Panc1 (cell line): ENCODE measurements at regions of chr5 and their contacts with region 1.

Region 1: DNA sequence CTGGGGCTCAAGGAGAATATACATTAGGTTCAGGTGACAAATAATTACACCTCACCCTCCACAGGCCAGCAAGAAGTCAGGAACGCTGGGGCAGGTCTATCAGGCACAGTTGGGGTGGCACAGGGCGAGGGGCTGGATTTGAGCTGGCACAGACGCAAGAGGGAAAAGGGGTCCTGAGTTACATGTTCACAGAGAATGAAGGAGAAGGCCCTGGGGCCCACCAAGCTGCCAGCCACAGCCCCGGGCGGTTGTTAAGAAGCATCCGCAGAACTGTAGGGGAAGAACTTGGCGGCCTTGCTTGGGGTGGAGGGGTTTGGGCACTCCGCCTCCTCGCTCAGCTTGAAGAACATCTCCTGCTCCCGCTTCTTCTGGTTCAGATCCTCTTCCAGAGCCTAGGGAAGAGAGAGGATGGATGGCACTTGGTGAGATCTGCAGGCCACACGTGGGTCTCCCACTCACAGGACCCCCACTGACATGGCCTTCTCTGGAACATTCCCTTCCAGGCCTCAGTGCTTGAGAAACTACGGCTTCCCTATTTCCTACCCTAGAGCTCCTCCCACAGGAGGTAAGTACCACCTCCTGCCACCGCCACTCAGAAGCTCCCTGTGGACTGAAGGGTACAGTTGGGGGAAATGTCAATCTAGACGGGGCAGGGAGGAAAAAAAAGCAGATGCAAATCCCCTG is 38.3 kb upstream of the FBXW11 start:
- DNase-seq: no peak
- ATAC-seq: no peak
- H3K4me3 ChIP-seq: no peak overlapping the region
- H3K27ac ChIP-seq: no peak overlapping the region
- H3K4me1 ChIP-seq: no peaks in the 10 kb centered on the region
- H3K27me3 ChIP-seq: no peaks in the 10 kb centered on the region
- CTCF ChIP-seq: no peak

Region 2: DNA sequence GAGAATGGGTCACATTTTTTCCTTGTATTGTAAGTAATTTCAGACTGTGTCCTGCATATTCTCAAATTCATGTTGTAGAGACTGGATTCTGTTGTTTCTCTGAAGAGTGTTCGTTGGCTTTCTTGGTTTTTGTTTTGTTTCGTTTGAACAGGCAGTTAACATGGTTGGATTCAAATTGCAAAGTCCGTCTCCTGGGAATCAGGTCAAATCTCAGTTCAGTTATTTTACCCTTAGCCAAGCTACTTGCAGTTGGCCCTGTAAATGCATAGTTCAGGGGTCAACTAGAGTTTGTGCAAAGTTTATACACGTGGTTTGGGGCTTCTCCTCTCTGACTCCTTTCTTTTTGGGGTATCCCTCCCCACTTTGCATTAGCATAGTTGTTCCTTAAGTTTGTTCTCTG is 16.6 kb before region 1 on chr5:
- CTCF ChIA-PET with region 1: interaction called, 10 read pairs
- POLR2A ChIA-PET with region 1: no interaction called
- in situ Hi-C with region 1: no loop called
- intact Hi-C with region 1: no loop called
- DNase-seq: no peak
- ATAC-seq: no peak
- H3K4me3 ChIP-seq: no peak overlapping the region
- H3K27ac ChIP-seq: no peak overlapping the region
- H3K4me1 ChIP-seq: no peaks in the 10 kb centered on the region
- H3K27me3 ChIP-seq: no peaks in the 10 kb centered on the region
- CTCF ChIP-seq: no peak